CD4-positive, alpha-beta T cell (primary cell): ENCODE measurements at regions of chr1 and their contacts with region 1.

Region 1: GRCh38 chr1:172719694-172720138 is 60.8 kb downstream of the FASLG start:
- DNase-seq: peak in 3 of 14 experiments; percentile 70 to 78 (median 75)
- ATAC-seq: peak; percentile 86
- H3K4me3 ChIP-seq: no peak overlapping the region
- H3K4me3 Mint-ChIP-seq: no peak overlapping the region
- H3K27ac ChIP-seq: no peak overlapping the region
- H3K27ac Mint-ChIP-seq: no peak overlapping the region
- H3K4me1 ChIP-seq: peaks cover 10% of the 10 kb centered on the region
- H3K4me1 Mint-ChIP-seq: peaks cover 35% of the 10 kb centered on the region
- H3K27me3 ChIP-seq: no peaks in the 10 kb centered on the region
- H3K27me3 Mint-ChIP-seq: no peaks in the 10 kb centered on the region
- CTCF ChIP-seq: peak; percentile 99

Region 2: DNA sequence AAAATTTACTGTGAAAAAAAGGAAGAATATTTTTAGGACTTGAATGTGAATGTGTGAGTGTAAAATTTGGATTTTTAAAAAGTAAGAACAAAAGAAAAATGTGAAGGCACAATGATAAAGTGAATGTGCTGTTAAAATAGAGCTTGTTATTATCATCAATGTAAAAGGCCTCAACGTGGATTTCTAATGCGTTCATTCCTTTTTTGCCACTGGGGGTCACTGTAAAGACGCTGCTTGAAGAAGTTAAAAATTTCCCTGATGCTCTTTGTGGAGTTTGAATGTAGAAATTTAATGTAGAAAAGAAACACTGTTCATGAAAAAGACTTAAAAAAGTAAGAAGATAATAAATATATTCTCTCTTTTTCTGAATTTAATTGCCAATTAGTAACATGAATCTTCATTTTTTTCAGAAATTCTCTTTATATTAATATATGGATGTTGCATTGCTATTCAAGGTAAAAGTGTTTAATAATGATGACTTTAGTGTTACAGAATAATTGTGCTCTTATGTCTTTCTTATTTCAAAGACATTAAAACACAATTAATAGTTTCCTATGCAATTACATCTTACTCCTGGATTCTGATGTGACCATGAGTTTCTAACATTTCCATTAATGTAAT is 716.9 kb before region 1 on chr1:
- CTCF ChIA-PET with region 1: no interaction called
- POLR2A ChIA-PET with region 1: no interaction called
- intact Hi-C with region 1: loop called in 1 of 2 experiments (anchors 5 kb)
- DNase-seq: peak in 8 of 14 experiments; percentile 3 to 65 (median 34)
- ATAC-seq: no peak
- H3K4me3 ChIP-seq: no peak overlapping the region
- H3K4me3 Mint-ChIP-seq: no peak overlapping the region
- H3K27ac ChIP-seq: no peak overlapping the region
- H3K27ac Mint-ChIP-seq: no peak overlapping the region
- H3K4me1 ChIP-seq: no peaks in the 10 kb centered on the region
- H3K4me1 Mint-ChIP-seq: no peaks in the 10 kb centered on the region
- H3K27me3 ChIP-seq: no peaks in the 10 kb centered on the region
- H3K27me3 Mint-ChIP-seq: peaks cover under 1% of the 10 kb centered on the region
- CTCF ChIP-seq: peak; percentile 71

Region 3: GRCh38 chr1:172429331-172430127 is 290.2 kb before region 1 on chr1:
- CTCF ChIA-PET with region 1: interaction called, 3 read pairs
- POLR2A ChIA-PET with region 1: interaction called, 3 read pairs
- intact Hi-C with region 1: loop called (anchors 5 kb)
- DNase-seq: peak in 12 of 14 experiments; percentile 8 to 81 (median 34)
- ATAC-seq: peak; percentile 75
- H3K4me3 ChIP-seq: no peak overlapping the region
- H3K4me3 Mint-ChIP-seq: peak overlapping the region; percentile 64
- H3K27ac ChIP-seq: no peak overlapping the region
- H3K27ac Mint-ChIP-seq: peak overlapping the region; percentile 75
- H3K4me1 ChIP-seq: peaks cover 39% of the 10 kb centered on the region
- H3K4me1 Mint-ChIP-seq: peaks cover 39% of the 10 kb centered on the region
- H3K27me3 ChIP-seq: no peaks in the 10 kb centered on the region
- H3K27me3 Mint-ChIP-seq: no peaks in the 10 kb centered on the region
- CTCF ChIP-seq: peak; percentile 80

Region 4: GRCh38 chr1:172537827-172538391 is 181.8 kb before region 1 on chr1:
- CTCF ChIA-PET with region 1: no interaction called
- POLR2A ChIA-PET with region 1: interaction called, 5 read pairs
- intact Hi-C with region 1: loop called in 1 of 2 experiments (anchors 5 kb)
- DNase-seq: no peak
- ATAC-seq: no peak
- H3K4me3 ChIP-seq: no peak overlapping the region
- H3K4me3 Mint-ChIP-seq: peak overlapping the region; percentile 18
- H3K27ac ChIP-seq: no peak overlapping the region
- H3K27ac Mint-ChIP-seq: no peak overlapping the region
- H3K4me1 ChIP-seq: peaks cover 13% of the 10 kb centered on the region
- H3K4me1 Mint-ChIP-seq: peaks cover 79% of the 10 kb centered on the region
- H3K27me3 ChIP-seq: no peaks in the 10 kb centered on the region
- H3K27me3 Mint-ChIP-seq: no peaks in the 10 kb centered on the region
- CTCF ChIP-seq: no peak

Region 5: DNA sequence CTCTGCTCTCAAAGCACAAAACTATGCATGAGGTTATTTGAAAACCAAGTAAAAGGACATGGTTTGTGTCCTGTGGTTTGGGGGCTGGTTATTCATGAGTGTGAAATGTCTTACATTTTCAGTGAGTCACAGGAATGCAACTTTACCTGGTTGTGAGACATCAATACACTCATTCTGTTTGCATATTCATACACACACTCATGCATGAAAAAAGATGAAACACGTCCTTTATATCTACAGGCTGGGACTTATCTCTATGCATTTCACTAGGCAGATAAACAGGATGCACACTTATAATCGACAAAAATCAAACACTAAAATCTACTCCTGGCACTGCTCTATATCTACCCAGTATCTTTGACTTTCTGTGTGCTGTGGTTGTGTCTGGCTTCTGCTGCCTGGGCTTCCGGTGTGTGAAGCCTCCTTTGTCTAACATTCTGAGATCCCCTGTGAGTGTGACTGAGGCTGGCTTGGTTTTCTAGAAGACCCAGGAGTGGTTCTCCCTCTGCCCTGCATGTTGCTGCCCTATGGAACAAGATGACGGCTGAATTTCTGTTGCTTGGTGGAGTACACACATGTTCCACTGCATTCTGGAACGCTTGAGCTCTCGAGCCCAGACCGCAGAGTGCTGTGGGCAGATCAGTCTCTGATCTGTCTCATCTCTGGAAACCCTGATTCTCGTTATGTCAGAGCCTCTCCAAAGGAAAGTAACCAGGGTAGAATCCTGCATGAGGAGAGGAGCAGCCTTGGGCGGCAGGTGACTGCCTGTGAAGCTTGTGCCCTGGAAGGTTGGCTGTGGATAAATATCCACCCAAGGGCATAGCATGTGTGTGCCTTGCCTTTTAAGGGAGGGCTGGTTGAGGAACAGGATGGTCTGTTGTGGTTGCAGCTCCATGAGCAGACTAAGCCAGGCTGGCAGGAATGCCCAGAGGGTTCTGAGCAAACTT is 80.6 kb before region 1 on chr1:
- CTCF ChIA-PET with region 1: interaction called, 20 read pairs
- POLR2A ChIA-PET with region 1: no interaction called
- intact Hi-C with region 1: no loop called
- DNase-seq: peak; percentile 34 to 81 (median 59)
- ATAC-seq: peak; percentile 78
- H3K4me3 ChIP-seq: peak overlapping the region; percentile 25
- H3K4me3 Mint-ChIP-seq: peak overlapping the region; percentile 54
- H3K27ac ChIP-seq: peak overlapping the region; percentile 37 to 52
- H3K27ac Mint-ChIP-seq: peak overlapping the region; percentile 89
- H3K4me1 ChIP-seq: peaks cover 67% of the 10 kb centered on the region
- H3K4me1 Mint-ChIP-seq: peaks cover 75% of the 10 kb centered on the region
- H3K27me3 ChIP-seq: no peaks in the 10 kb centered on the region
- H3K27me3 Mint-ChIP-seq: no peaks in the 10 kb centered on the region
- CTCF ChIP-seq: no peak

Region 6: DNA sequence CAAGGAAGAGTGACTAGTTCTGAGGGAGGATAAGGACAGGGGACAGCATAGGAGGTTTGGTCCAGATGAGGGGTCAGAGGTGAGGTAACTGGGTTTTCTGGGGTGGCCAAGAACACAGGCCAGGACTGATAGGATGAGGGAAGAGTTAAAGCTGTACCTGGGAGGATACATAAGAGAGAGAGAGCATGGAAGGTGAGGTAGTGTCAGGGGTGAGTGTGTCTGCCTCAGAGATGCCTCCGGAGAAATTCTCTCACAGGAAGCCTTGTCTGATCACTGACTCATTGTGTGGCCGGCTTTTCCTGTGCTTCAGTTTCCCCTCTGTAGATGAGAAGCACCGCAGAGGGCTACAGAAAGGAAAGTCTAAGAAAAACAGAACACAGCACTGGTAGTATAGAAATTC is 20.6 kb before region 1 on chr1:
- CTCF ChIA-PET with region 1: interaction called, 10 read pairs
- POLR2A ChIA-PET with region 1: no interaction called
- intact Hi-C with region 1: loop called in 1 of 2 experiments (anchors 2 kb)
- DNase-seq: peak; percentile 45 to 90 (median 67)
- ATAC-seq: peak; percentile 84
- H3K4me3 ChIP-seq: no peak overlapping the region
- H3K4me3 Mint-ChIP-seq: peak overlapping the region; percentile 46
- H3K27ac ChIP-seq: peak overlapping the region; percentile 73 to 83
- H3K27ac Mint-ChIP-seq: no peak overlapping the region
- H3K4me1 ChIP-seq: peaks cover 70% of the 10 kb centered on the region
- H3K4me1 Mint-ChIP-seq: peaks cover 6% of the 10 kb centered on the region
- H3K27me3 ChIP-seq: no peaks in the 10 kb centered on the region
- H3K27me3 Mint-ChIP-seq: no peaks in the 10 kb centered on the region
- CTCF ChIP-seq: no peak

Region 7: DNA sequence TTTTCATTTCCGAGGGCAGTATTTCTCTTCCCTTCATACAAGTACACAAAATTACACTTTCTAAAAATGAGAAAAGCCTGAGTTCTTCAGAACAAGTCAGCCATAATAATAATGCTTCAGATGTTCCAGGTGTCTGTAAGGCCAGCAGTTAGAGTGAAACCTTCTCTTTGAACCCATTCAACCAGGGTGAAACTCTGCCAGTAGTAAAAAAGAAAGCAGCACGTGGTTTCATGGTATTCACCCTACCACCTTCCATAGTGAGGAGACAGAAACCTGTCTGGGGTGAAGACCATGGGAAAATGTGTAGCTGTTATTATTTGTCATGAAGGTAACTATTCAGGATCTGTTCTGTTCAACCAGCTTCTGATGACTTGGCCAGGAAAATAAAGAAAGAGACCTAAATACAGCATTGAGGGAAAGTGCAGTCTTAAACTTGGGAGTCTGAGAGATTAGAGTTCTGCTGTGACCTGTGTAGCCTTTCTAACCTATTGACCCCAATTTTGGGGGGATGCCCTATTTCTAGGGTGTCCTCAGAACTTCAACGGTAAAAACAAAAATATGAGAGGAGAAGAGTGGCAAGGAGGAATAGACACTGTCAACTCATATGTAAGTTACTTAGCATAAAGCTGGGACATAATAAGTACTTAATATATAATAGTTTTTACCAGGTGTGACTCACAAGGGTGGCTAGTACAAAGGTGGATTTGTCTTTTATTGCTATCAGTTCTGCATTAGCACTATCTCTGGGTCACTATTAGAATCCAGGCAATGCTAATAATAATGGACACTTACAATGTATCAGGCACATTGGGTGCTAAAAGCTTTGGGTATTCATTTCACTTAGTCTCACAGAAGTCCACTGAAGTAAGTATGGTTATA is 557.4 kb after region 1 on chr1:
- CTCF ChIA-PET with region 1: no interaction called
- POLR2A ChIA-PET with region 1: no interaction called
- intact Hi-C with region 1: no loop called
- DNase-seq: no peak
- ATAC-seq: no peak
- H3K4me3 ChIP-seq: no peak overlapping the region
- H3K4me3 Mint-ChIP-seq: no peak overlapping the region
- H3K27ac ChIP-seq: no peak overlapping the region
- H3K27ac Mint-ChIP-seq: no peak overlapping the region
- H3K4me1 ChIP-seq: no peaks in the 10 kb centered on the region
- H3K4me1 Mint-ChIP-seq: no peaks in the 10 kb centered on the region
- H3K27me3 ChIP-seq: no peaks in the 10 kb centered on the region
- H3K27me3 Mint-ChIP-seq: no peaks in the 10 kb centered on the region
- CTCF ChIP-seq: no peak